Upper lobe of right lung (tissue), 1 donor: ENCODE measurements at regions of chr2 and their contacts with region 1.

Region 1: DNA sequence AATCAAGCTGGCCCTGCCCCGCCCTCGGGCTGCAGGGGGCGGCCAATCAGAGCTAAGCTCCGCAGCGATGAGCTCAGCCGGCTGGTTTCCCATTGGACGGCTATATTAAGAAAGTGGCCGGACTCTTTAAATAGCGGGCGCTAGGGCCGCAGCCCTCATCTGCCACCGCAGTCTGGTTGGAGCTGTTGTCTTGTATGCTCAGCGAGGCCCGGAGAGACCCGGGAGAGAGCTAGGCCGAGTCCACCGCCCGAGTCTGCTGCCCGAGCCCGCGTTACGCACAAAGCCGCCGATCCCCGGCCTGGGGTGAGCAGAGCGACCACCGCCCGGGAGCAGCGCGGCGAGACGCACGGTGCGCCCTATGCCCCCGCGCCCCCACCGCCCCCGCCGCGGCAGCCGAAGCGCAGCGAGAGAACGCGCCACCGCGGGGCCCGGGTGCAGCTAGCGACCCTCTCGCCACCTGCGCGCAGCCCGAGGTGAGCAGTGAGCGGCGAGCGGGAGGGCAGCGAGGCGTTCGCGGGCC is at the start of gene RHOB:
- DNase-seq: peak; percentile 98
- ATAC-seq: peak; percentile 95
- H3K4me3 ChIP-seq: peak within 1 kb of the TSS; percentile 86
- H3K27ac ChIP-seq: peak within 1 kb of the TSS; percentile 99
- H3K4me1 ChIP-seq: peaks cover 29% of the 10 kb centered on the region
- H3K27me3 ChIP-seq: no peaks in the 10 kb centered on the region
- CTCF ChIP-seq: no peak
- total RNA-seq, gene RHOB: 191 TPM

Region 2: DNA sequence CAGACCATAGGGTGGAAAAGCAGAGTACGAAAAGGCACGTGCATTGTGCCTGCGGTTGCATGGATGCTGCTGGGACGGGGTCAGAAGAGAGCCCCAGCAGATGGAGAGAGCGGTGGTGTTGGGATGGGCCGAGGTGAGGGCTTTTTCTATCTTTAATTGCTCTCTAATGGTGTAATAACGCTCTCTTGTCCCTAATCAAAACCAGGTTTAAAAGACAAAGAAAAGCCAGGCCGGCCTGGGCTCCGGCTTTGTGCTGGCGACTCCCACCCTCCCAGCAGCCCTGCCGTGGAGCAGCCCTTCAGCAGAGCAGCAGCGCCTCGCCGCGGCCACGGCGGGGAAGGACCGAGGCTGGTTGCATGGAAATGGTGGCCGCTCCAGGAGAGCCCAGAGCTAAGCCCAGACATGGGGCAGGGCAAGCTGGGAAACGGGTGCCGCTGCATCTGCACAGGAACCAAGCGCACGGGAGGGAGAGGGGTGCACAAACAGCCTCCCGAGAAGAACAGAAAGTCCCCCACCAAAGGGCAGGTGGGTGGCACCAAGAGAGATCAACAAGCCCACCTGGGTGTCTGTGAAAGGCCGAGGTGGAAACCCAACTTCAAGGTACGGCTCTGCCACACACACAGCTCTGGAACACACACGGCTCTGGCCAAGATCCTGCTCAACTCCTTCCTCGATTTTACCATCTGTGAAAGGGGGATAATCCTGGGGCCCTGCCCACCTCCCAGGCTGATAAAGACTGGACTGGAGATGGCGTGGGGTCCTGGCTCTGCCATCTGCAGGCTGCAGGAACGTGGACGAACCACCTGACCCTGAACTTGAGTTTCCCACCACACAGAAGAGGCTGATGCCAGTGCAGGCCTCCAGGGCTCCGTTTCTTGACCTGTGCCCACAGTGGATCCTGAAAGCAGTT is 189.0 kb after region 1 on chr2:
- intact Hi-C with region 1: loop called (anchors 10 kb)
- DNase-seq: peak; percentile 90
- ATAC-seq: peak; percentile 85
- H3K4me3 ChIP-seq: no peak overlapping the region
- H3K27ac ChIP-seq: peak overlapping the region; percentile 70
- H3K4me1 ChIP-seq: peaks cover 24% of the 10 kb centered on the region
- H3K27me3 ChIP-seq: no peaks in the 10 kb centered on the region
- CTCF ChIP-seq: peak; percentile 89